ENCODE measurements at regions of chr2 and their contacts with region 1.

Region 1: GRCh38 chr2:26244309-26245121 is at the starts of genes HADHA and HADHB:
- DNase-seq: peak; percentile 80 to 91 (median 89)
- H3K4me3 ChIP-seq: peak within 1 kb of the TSS; percentile 69 to 99 (median 93)
- H3K27ac ChIP-seq: peak within 1 kb of the TSS; percentile 87 to 100 (median 99)
- H3K27me3 ChIP-seq: no peaks in the 10 kb centered on the region
- CTCF ChIP-seq: peak in 50 of 56 donors; percentile 10 to 67 (median 43)
- total RNA-seq, gene HADHA: 61.1 to 107 (median 75.0) TPM
- total RNA-seq, gene HADHB: 74.8 to 225 (median 119) TPM

Region 2: GRCh38 chr2:25885933-25886332 is 358.6 kb before region 1 on chr2:
- intact Hi-C with region 1: loop called in 1 of 2 experiments (anchors 10 kb)
- DNase-seq: no peak
- H3K4me3 ChIP-seq: no peak overlapping the region
- H3K27ac ChIP-seq: no peak overlapping the region
- H3K27me3 ChIP-seq: no peaks in the 10 kb centered on the region
- CTCF ChIP-seq: no peak

Region 3: DNA sequence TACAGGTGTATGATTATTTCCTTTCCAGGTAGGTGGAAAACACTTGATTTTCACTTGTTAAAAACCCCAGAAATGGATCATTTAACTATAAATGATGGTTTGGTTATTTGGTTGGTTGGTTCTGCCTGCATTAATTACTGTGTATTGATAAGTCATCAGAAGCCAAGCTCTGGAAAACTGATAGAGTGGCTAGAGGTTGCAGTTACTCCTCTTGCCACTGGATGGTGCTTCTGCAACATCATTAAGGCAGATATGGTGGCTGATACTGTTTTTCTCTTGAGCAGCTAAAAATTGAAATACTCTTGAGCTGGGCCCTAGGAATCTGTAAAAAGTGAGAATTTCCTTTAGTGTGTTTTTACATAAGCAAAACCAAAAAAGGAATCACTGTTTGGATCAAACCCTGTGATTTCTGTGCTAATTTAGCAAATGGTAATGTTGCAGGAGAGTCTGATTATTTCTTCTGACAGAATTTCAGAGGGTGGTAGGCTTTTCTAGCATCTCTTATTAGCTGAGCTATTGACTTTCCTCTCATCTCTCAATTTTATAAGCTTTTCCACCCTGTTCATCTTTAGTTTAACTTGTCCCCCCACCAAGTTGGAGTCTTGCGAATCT is 156.4 kb before region 1 on chr2:
- intact Hi-C with region 1: loop called in 1 of 2 experiments (anchors 10 kb)
- DNase-seq: peak in 4 of 10 donors; percentile 10 to 42 (median 30)
- H3K4me3 ChIP-seq: peak overlapping the region in 1 of 59 donors; percentile 3
- H3K27ac ChIP-seq: peak overlapping the region in 44 of 59 donors; percentile 3 to 69 (median 48)
- H3K27me3 ChIP-seq: no peaks in the 10 kb centered on the region
- CTCF ChIP-seq: peak; percentile 45 to 95 (median 87)

Region 4: GRCh38 chr2:26345545-26346453 is 101.3 kb after region 1 on chr2 and contains the start of gene SELENOI:
- intact Hi-C with region 1: loop called (anchors 5 to 10 kb)
- DNase-seq: peak; percentile 97 to 100 (median 99)
- H3K4me3 ChIP-seq: peak within 1 kb of the TSS; percentile 68 to 99 (median 93)
- H3K27ac ChIP-seq: peak within 1 kb of the TSS; percentile 58 to 97 (median 92)
- H3K27me3 ChIP-seq: no peaks in the 10 kb centered on the region
- CTCF ChIP-seq: peak in 22 of 56 donors; percentile 0 to 35 (median 24)
- total RNA-seq, gene SELENOI: 25.9 to 83.9 (median 61.6) TPM

Measured in dorsolateral prefrontal cortex (tissue), 120 donors.